HEK293 (cell line): ENCODE measurements at regions of chr17 and their contacts with region 1.

Region 1: GRCh38 chr17:81941790-81942553 is 4.9 kb upstream of the PYCR1 start:
- H3K4me3 ChIP-seq: no peak overlapping the region
- H3K27ac ChIP-seq: no peak overlapping the region
- H3K4me1 ChIP-seq: peaks cover 2% of the 10 kb centered on the region; the same call in 1 of the 2 replicates
- CTCF ChIP-seq: no peak

Region 2: DNA sequence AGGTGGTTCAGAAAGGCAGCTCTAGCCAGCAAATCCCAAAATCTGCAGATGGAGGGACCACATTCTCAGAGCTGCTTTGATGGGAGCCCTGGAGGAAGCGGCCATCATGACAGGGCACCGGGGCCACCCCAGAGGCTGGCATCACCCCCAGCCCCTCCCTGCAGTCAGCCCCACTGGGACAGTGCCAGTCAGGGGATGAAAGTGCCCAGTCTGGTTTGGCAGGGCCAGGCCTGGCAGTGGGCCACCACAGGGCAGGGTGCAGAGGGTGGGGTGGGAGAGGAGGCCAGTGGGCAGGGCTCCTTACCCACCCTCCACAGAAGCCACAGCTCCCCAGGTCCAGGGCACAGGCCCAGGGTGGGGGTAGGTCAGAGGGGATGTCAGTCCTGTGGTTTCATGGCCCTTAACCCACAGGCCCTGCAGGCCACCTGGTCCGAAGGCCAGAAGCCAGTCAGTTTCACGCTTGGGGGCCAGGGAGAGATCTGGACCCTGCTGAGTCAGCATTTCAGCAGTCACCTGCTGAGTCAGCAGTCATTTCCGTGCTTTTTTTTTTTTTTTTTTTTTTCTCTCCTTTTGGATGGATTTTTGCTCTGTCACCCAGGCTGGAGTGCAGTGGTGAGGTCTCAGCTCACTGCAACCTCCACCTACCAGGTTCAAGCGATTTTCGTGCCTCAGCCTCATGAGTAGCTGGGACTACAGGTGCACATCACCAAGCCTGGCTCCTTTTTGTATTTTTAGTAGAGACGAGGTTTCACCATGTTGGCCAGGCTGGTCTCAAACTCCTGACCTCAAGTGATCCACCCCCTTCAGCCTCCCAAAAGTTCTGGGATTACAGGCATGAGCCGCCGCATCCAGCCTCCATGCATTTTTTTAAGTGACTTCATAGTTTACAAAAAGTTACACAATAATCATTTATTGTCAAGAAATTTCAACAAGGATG is 219.5 kb before region 1 on chr17:
- CTCF ChIA-PET with region 1: no interaction called
- POLR2A ChIA-PET with region 1: interaction called, 13 read pairs
- H3K4me3 ChIP-seq: no peak overlapping the region
- H3K27ac ChIP-seq: no peak overlapping the region
- H3K4me1 ChIP-seq: peaks cover 5% of the 10 kb centered on the region
- CTCF ChIP-seq: no peak

Region 3: GRCh38 chr17:81879121-81879520 is 62.9 kb before region 1 on chr17:
- CTCF ChIA-PET with region 1: no interaction called
- POLR2A ChIA-PET with region 1: no interaction called
- H3K4me3 ChIP-seq: no peak overlapping the region
- H3K27ac ChIP-seq: no peak overlapping the region
- H3K4me1 ChIP-seq: no peaks in the 10 kb centered on the region
- CTCF ChIP-seq: no peak